Activated CD4-positive, alpha-beta memory T cell treated with anti-CD3 and anti-CD28 coated beads for 36 hours (primary cell): ENCODE measurements at regions of chr6 and their contacts with region 1.

Region 1: DNA sequence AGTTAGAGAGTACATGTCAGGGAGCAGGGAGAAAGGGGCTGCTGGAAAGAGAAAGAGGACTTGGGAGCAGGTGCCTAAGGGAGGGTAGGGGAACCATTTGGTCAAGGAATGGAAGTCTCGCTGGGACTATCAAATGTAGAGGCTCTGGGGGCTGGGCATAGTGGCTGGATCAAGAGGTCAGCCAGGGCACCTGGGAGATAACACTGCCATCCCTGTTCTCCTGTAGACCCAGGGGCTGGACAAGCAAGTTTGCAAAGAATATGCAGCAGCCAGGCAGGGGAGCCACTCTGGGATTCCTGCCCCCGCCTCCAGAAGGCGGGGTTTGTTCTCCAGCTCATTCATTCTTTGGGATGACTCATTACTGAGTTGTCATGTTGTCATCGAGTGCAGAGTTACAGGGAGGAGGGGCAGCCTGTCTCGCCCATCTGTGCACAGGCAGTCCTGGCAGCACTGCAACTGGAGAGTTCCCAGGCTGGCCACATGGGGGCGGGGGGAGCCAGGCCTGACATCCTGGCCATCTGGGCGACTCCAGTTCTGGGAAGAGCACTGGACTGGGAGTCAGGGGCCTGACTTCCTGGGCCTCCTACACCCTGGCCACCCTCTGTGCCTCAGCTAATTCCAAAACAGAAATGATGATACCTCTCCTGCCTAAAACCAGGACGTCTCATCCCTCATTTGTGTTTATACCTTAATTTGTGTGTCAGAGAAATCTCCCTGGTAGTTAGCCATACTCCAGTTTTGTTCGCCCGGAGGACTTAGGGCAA is 28.2 kb upstream of the ZFAND3 start:
- DNase-seq: peak; percentile 94
- H3K4me3 Mint-ChIP-seq: no peak overlapping the region
- H3K27ac Mint-ChIP-seq: no peak overlapping the region
- H3K4me1 Mint-ChIP-seq: peaks cover 12% of the 10 kb centered on the region
- H3K27me3 Mint-ChIP-seq: no peaks in the 10 kb centered on the region

Region 2: DNA sequence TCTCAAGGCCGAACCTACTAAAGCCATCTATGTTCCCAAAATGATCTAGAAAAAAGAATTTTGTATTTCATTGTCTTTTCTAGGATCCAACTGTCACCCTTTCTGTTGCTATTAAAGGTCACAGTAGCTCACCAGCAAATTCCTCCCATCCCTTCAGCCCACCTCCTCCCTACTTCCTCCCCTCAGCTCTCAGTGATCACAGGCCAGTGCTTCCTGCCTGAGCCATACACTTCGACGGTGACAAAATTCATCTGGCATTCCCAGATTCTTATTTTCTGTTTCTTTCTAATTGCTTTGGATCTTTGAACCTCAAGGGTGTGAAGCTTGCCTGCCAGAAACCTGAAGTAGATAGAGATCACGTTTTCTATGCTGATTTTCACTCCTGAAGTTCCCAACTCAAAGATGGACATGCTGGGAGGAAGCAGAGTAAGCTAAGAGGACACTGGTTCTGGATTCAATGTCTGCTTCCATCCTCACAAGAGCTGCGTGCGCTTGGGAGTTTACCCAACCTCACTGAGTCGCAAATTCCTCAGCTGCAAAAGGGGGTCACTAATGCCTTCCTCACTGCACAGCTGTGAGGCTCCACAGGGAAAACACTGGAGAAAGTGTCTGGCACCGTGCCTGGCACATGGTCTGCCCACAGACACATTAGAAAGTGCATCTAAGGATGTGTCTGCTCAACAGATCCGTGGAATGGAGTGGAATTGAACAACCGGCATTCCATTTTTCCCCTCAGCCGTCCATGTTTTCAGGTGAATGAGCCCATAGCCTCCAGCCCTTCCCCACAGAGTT is 128.1 kb before region 1 on chr6:
- CTCF ChIA-PET with region 1: no interaction called
- POLR2A ChIA-PET with region 1: no interaction called
- intact Hi-C with region 1: no loop called
- DNase-seq: no peak
- H3K4me3 Mint-ChIP-seq: no peak overlapping the region
- H3K27ac Mint-ChIP-seq: no peak overlapping the region
- H3K4me1 Mint-ChIP-seq: no peaks in the 10 kb centered on the region
- H3K27me3 Mint-ChIP-seq: no peaks in the 10 kb centered on the region

Region 3: DNA sequence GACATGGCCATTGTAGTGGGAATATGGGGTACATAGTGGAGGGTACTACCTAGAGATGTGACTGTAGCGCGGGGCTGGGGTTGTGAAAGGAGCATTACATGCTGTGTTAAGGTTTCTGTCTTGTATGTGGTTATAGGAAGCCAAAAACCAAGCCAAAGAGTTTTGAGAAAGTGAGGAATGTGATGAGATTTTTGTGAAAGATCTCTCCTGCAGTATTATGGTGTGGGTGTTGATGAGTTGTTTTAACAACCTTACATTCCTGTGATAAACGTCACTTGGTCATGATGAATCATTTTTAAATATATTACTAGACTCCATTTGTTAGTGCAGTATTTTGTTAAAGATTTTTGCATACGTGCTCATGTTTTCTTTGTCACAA is 77.1 kb after region 1 on chr6:
- CTCF ChIA-PET with region 1: interaction called, 3 read pairs
- POLR2A ChIA-PET with region 1: no interaction called
- intact Hi-C with region 1: loop called (anchors 2 kb)
- DNase-seq: peak; percentile 32
- H3K4me3 Mint-ChIP-seq: no peak overlapping the region
- H3K27ac Mint-ChIP-seq: no peak overlapping the region
- H3K4me1 Mint-ChIP-seq: peaks cover 66% of the 10 kb centered on the region
- H3K27me3 Mint-ChIP-seq: no peaks in the 10 kb centered on the region

Region 4: DNA sequence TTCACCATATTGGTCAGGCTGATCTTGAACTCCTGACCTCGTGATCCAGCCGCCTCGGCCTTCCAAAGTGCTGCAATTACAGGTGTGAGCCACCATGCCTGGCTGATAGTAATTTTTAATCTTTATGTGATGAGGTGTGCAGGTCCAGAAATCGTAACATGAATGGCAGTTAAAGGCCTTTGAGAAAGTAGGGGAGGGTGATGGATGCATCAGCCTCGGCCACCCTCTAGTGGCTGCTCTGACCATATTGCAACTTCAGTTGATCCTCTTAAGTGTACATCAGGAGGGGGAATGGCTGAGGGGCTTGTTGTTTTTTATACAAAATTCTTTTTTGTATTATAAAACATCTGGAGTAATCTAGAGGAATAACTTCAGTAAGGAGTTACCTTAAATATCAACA is 221.2 kb after region 1 on chr6:
- CTCF ChIA-PET with region 1: interaction called, 4 read pairs
- POLR2A ChIA-PET with region 1: no interaction called
- intact Hi-C with region 1: loop called (anchors 1 kb)
- DNase-seq: peak; percentile 34
- H3K4me3 Mint-ChIP-seq: no peak overlapping the region
- H3K27ac Mint-ChIP-seq: no peak overlapping the region
- H3K4me1 Mint-ChIP-seq: peaks cover 4% of the 10 kb centered on the region
- H3K27me3 Mint-ChIP-seq: no peaks in the 10 kb centered on the region

Region 5: GRCh38 chr6:38020593-38020992 is 229.3 kb after region 1 on chr6:
- CTCF ChIA-PET with region 1: interaction called, 3 read pairs
- POLR2A ChIA-PET with region 1: no interaction called
- intact Hi-C with region 1: loop called (anchors 2 kb)
- DNase-seq: no peak
- H3K4me3 Mint-ChIP-seq: no peak overlapping the region
- H3K27ac Mint-ChIP-seq: no peak overlapping the region
- H3K4me1 Mint-ChIP-seq: peaks cover 6% of the 10 kb centered on the region
- H3K27me3 Mint-ChIP-seq: no peaks in the 10 kb centered on the region